ENCODE measurements at regions of chr1 and their contacts with region 1.

Region 1: DNA sequence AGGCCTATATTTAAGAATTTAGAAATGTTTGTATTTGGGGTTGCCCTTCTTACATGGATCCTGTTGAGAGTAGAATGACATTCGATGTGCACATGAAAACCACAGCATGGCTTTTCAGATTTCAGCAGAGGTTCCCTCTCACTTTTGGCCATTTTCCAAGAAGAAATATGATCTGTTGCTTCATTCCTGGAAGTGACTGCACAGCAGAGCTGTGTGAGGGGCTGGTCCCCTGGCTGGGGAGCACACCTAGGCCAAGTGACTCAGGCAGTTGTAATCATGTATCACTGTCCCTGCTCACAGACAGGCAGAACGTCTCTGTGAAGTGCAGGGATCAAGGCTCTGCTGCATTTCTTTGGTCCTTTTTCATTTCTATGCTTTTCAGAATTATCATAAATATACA is 32.3 kb downstream of the AGT start:
- DNase-seq: peak; percentile 74
- H3K4me3 Mint-ChIP-seq: no peak overlapping the region
- H3K27ac Mint-ChIP-seq: no peak overlapping the region
- H3K4me1 Mint-ChIP-seq: peaks cover 37% of the 10 kb centered on the region
- H3K27me3 Mint-ChIP-seq: no peaks in the 10 kb centered on the region
- CTCF ChIP-seq: no peak

Region 2: DNA sequence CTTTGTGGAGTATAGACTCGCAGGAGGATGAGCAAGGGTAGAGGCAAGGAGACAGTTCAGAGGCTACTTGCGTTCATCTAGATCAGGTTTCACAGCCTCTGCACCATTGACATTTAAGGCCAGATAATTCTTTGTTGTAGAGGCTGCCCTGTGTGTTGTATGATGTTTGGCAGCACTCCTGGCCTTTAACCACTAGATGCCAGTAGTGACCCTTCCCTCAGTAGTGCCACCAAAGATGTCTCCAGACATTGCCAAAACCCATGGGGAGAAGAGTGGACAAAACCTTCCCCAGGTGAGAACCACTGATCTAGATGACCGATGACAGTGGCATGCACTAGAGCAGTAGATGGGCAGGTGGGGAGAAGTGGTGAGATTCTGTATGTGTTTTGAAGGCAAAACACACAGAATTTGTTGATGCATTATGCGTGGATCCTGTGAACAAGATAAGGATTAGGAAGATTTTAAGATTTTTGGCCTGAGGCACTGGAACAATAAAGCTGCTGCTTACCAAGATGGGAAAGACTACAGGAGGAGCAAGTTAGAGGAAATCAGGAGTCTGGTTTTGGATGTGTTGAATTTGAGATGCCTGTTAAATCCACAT is 49.2 kb before region 1 on chr1:
- CTCF ChIA-PET with region 1: no interaction called
- intact Hi-C with region 1: no loop called
- DNase-seq: peak; percentile 54
- H3K4me3 Mint-ChIP-seq: no peak overlapping the region
- H3K27ac Mint-ChIP-seq: no peak overlapping the region
- H3K4me1 Mint-ChIP-seq: no peaks in the 10 kb centered on the region
- H3K27me3 Mint-ChIP-seq: no peaks in the 10 kb centered on the region
- CTCF ChIP-seq: peak; percentile 78

Region 3: GRCh38 chr1:230642263-230642959 is 39.2 kb before region 1 on chr1 and contains the start of gene COG2:
- CTCF ChIA-PET with region 1: interaction called, 3 read pairs
- intact Hi-C with region 1: loop called (anchors 5 kb)
- DNase-seq: peak; percentile 99
- H3K4me3 Mint-ChIP-seq: peak within 1 kb of the TSS; percentile 99
- H3K27ac Mint-ChIP-seq: peak within 1 kb of the TSS; percentile 95
- H3K4me1 Mint-ChIP-seq: peaks cover 47% of the 10 kb centered on the region
- H3K27me3 Mint-ChIP-seq: no peaks in the 10 kb centered on the region
- CTCF ChIP-seq: peak; percentile 99
- total RNA-seq, gene COG2: 55.0 and 59.2 TPM in 2 replicates

Region 4: GRCh38 chr1:230744382-230744781 is 62.8 kb after region 1 on chr1:
- CTCF ChIA-PET with region 1: interaction called, 4 read pairs
- intact Hi-C with region 1: loop called (anchors 5 kb)
- DNase-seq: no peak
- H3K4me3 Mint-ChIP-seq: no peak overlapping the region
- H3K27ac Mint-ChIP-seq: no peak overlapping the region
- H3K4me1 Mint-ChIP-seq: peaks cover 21% of the 10 kb centered on the region
- H3K27me3 Mint-ChIP-seq: no peaks in the 10 kb centered on the region
- CTCF ChIP-seq: no peak

Region 5: GRCh38 chr1:230825063-230825721 is 143.6 kb after region 1 on chr1:
- CTCF ChIA-PET with region 1: no interaction called
- intact Hi-C with region 1: no loop called
- DNase-seq: peak; percentile 50
- H3K4me3 Mint-ChIP-seq: peak overlapping the region; percentile 55
- H3K27ac Mint-ChIP-seq: peak overlapping the region; percentile 99
- H3K4me1 Mint-ChIP-seq: peaks cover 52% of the 10 kb centered on the region
- H3K27me3 Mint-ChIP-seq: no peaks in the 10 kb centered on the region
- CTCF ChIP-seq: no peak